Caco-2 (cell line): ENCODE measurements at regions of chr11 and their contacts with region 1.

Region 1: GRCh38 chr11:111944651-111945051 is 7.5 kb downstream of the DIXDC1 start:
- DNase-seq: no peak
- H3K4me3 ChIP-seq: no peak overlapping the region
- H3K4me3 Mint-ChIP-seq: peak overlapping the region; percentile 51
- H3K27ac Mint-ChIP-seq: peak overlapping the region; percentile 57
- H3K4me1 ChIP-seq: peaks cover 13% of the 10 kb centered on the region
- H3K4me1 Mint-ChIP-seq: peaks cover 13% of the 10 kb centered on the region
- H3K27me3 ChIP-seq: no peaks in the 10 kb centered on the region
- H3K27me3 Mint-ChIP-seq: no peaks in the 10 kb centered on the region
- CTCF ChIP-seq: no peak

Region 2: DNA sequence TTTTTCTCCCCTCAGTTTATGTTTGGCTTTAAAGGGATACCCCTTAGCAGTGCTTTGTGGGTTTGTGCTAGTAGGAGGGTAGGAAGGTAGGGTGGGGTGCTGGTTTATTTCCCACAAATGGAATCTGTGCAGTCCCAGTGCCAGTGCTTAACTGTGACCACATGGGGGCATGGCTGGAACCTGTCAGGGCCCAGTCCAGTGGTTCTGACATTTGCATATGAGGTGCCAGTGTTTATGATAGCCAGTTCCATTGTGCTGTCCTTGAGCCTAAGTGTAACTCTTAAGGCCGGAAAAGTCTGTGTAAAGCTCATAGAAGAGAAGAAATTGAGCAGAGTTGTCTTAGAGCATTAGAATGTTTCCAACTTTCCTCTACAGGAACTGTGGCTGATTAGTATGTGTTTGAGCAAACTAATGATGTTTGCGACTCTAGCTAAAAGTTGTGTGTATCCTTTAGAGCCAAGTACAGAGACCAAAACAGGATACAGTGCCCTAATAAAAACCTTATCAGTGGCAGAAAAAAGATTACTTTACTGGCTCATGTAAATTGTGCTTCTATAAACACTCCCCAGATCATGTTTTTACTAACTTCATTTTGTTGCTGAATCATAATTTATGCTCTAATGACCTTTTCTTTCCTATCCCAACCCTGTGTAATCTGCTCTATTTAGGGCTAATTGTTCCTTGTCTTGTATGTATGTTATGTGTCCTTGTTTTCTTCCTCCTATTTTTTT is 30.6 kb after region 1 on chr11:
- CTCF ChIA-PET with region 1: no interaction called
- POLR2A ChIA-PET with region 1: no interaction called
- intact Hi-C with region 1: loop called (anchors 2 kb)
- DNase-seq: peak in 1 of 2 experiments; percentile 57
- H3K4me3 ChIP-seq: no peak overlapping the region
- H3K4me3 Mint-ChIP-seq: no peak overlapping the region
- H3K27ac Mint-ChIP-seq: no peak overlapping the region
- H3K4me1 ChIP-seq: no peaks in the 10 kb centered on the region
- H3K4me1 Mint-ChIP-seq: no peaks in the 10 kb centered on the region
- H3K27me3 ChIP-seq: no peaks in the 10 kb centered on the region; the same call in 1 of the 2 replicates
- H3K27me3 Mint-ChIP-seq: no peaks in the 10 kb centered on the region
- CTCF ChIP-seq: peak; percentile 61 to 64

Region 3: DNA sequence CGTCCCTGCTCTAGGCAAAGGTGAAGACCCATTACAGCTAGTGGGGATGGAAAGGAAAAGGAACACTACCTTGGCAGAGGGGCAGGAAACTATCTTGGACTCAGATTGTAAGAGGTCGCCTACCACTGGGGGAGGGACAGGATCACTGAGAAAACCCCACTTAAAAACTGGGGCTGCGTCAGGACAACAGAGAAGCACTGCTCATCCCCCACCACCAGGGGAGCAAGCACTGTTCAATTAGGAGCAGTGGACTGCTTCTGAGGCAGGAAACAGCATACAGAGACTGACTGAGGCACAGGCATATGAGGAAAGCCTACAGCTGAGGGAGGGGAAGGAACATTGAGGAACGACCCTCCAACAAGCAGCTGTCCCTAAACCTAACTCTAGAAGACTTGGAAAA is 59.7 kb after region 1 on chr11:
- CTCF ChIA-PET with region 1: no interaction called
- POLR2A ChIA-PET with region 1: no interaction called
- intact Hi-C with region 1: loop called (anchors 2 kb)
- DNase-seq: peak; percentile 59 to 73
- H3K4me3 ChIP-seq: no peak overlapping the region
- H3K4me3 Mint-ChIP-seq: no peak overlapping the region
- H3K27ac Mint-ChIP-seq: no peak overlapping the region
- H3K4me1 ChIP-seq: peaks cover 12% of the 10 kb centered on the region
- H3K4me1 Mint-ChIP-seq: peaks cover 10% of the 10 kb centered on the region
- H3K27me3 ChIP-seq: no peaks in the 10 kb centered on the region
- H3K27me3 Mint-ChIP-seq: no peaks in the 10 kb centered on the region
- CTCF ChIP-seq: peak; percentile 79 to 83